Right ventricle myocardium inferior (tissue), 1 donor: ENCODE measurements at regions of chr6 and their contacts with region 1.

Region 1: GRCh38 chr6:11064836-11065235 is 20.7 kb upstream of the ELOVL2 start:
- DNase-seq: no peak
- ATAC-seq: no peak

Region 2: GRCh38 chr6:10478187-10479040 is 586.4 kb before region 1 on chr6:
- intact Hi-C with region 1: loop called (anchors 5 kb)
- DNase-seq: no peak
- ATAC-seq: no peak

Region 3: GRCh38 chr6:10954590-10955010 is 110.2 kb before region 1 on chr6:
- intact Hi-C with region 1: loop called (anchors 1 kb)
- DNase-seq: peak; percentile 87
- ATAC-seq: peak; percentile 60

Region 4: GRCh38 chr6:11172501-11173332 is 107.9 kb after region 1 on chr6:
- intact Hi-C with region 1: no loop called
- DNase-seq: peak; percentile 83
- ATAC-seq: no peak